HCT116 (cell line): ENCODE measurements at regions of chr7 and their contacts with region 1.

Region 1: DNA sequence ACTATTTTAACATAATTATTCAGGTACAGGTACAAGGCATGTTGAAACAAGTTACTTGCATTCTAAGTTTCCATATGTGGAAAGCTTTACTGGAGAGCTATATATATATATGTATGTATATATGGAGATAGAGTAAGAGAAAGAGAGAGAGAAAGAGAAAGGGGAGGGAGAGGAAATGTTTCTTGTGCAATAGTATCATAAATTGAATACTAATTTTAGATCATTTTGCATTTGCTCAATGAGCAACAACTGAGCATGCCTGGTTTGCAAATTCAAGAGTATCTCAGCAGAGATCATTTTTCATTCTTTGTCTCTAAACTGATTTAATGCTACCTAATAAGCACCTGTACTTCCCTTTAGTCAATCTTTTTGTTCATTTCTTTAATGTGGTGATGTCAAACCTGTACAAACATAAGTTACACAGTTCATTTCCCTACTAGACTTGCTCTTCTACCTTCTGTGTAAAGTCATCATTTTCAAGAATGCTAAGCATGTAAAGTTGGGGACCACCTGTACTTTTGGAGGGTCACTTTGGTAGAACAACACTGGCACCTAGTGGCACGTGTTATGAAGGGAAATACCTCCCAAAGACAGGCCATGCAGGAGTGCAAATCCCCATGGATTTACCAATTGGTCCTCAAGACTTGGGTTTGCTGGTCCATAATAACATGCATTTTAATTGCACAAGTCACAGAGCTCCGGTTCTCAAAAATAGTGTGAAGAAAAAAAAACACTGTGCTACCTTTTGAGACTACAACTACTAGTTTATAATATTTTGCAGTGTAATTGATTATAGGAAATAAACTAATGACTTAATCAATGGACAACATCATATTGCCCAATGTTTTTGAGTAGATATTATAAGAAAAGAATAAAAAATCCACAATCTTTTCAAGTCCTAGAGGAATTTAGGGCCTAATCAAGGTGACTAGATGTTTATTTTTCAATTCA is 431.2 kb upstream of the IGFBP3 start:
- DNase-seq: peak; percentile 56
- ATAC-seq: peak; percentile 86
- H3K4me3 ChIP-seq: no peak overlapping the region
- H3K27ac ChIP-seq: no peak overlapping the region
- H3K4me1 ChIP-seq: no peaks in the 10 kb centered on the region
- H3K27me3 ChIP-seq: no peaks in the 10 kb centered on the region
- CTCF ChIP-seq: peak; percentile 56 to 84 (median 76); a peak in 5 of 6 replicates
- POLR2A ChIP-seq: no peak
- RAD21 ChIP-seq: peak; percentile 90

Region 2: GRCh38 chr7:45890902-45891461 is 461.3 kb before region 1 on chr7:
- CTCF ChIA-PET with region 1: no interaction called
- POLR2A ChIA-PET with region 1: no interaction called
- RAD21 ChIA-PET with region 1: no interaction called
- intact Hi-C with region 1: loop called (anchors 1 kb)
- DNase-seq: peak; percentile 22
- ATAC-seq: 0 out of 2 replicates have a peak, but pooled peaks have one; percentile 40
- H3K4me3 ChIP-seq: no peak overlapping the region
- H3K27ac ChIP-seq: no peak overlapping the region
- H3K4me1 ChIP-seq: peaks cover 0 to under 1% of the 10 kb centered on the region in 2 experiments; a peak in 3 of 4 replicates
- H3K27me3 ChIP-seq: no peaks in the 10 kb centered on the region
- CTCF ChIP-seq: peak; percentile 38 to 78 (median 63); a peak in 4 of 6 replicates
- POLR2A ChIP-seq: no peak
- RAD21 ChIP-seq: peak; percentile 77

Region 3: GRCh38 chr7:45917658-45918057 is 434.6 kb before region 1 on chr7:
- CTCF ChIA-PET with region 1: interaction called, 27 read pairs
- POLR2A ChIA-PET with region 1: no interaction called
- RAD21 ChIA-PET with region 1: interaction called, 4 to 6 read pairs
- intact Hi-C with region 1: loop called (anchors 1 kb)
- DNase-seq: no peak
- ATAC-seq: peak; percentile 69
- H3K4me3 ChIP-seq: no peak overlapping the region
- H3K27ac ChIP-seq: no peak overlapping the region
- H3K4me1 ChIP-seq: peaks cover 3 to 24% of the 10 kb centered on the region in 2 experiments; a peak in 2 of 4 replicates
- H3K27me3 ChIP-seq: peaks cover 8% of the 10 kb centered on the region; the same call in 1 of the 2 replicates
- CTCF ChIP-seq: peak; percentile 70 to 95 (median 91)
- POLR2A ChIP-seq: no peak
- RAD21 ChIP-seq: peak; percentile 84

Region 4: DNA sequence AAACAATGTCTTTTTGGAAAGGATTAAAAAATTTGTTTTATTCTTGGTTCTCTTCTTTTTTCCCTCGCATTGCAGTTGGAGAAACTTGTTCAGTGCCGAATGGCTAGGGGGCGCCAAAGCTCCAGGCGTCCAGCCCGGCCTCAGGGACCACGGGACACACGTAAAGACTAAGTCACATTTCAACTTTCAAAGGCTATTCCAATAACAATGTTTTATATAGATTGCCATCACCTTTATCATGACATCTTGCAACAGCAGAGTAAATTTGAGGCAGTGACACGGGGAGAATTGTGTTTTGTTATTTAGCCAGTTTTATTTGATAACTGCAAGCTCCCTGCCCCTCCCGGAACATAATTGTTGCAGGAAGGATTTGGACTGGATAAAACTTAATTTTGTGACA is 429.0 kb before region 1 on chr7:
- CTCF ChIA-PET with region 1: interaction called, 27 read pairs
- POLR2A ChIA-PET with region 1: no interaction called
- RAD21 ChIA-PET with region 1: interaction called, 4 to 6 read pairs
- intact Hi-C with region 1: loop called (anchors 1 kb)
- DNase-seq: no peak
- ATAC-seq: peak; percentile 45; the same call in 1 of the 2 replicates
- H3K4me3 ChIP-seq: no peak overlapping the region
- H3K27ac ChIP-seq: no peak overlapping the region
- H3K4me1 ChIP-seq: peaks cover 3 to 27% of the 10 kb centered on the region in 2 experiments; a peak in 2 of 4 replicates
- H3K27me3 ChIP-seq: peaks cover 8% of the 10 kb centered on the region; the same call in 1 of the 2 replicates
- CTCF ChIP-seq: peak; percentile 82 to 97 (median 93)
- POLR2A ChIP-seq: no peak
- RAD21 ChIP-seq: peak; percentile 93